RWPE1 (cell line): ENCODE measurements at regions of chr6 and their contacts with region 1.

Region 1: GRCh38 chr6:83514866-83515466 is 2.6 kb downstream of the PRSS35 start:
- DNase-seq: peak; percentile 38
- H3K27ac ChIP-seq: no peak overlapping the region
- CTCF ChIP-seq: peak; percentile 77

Region 2: DNA sequence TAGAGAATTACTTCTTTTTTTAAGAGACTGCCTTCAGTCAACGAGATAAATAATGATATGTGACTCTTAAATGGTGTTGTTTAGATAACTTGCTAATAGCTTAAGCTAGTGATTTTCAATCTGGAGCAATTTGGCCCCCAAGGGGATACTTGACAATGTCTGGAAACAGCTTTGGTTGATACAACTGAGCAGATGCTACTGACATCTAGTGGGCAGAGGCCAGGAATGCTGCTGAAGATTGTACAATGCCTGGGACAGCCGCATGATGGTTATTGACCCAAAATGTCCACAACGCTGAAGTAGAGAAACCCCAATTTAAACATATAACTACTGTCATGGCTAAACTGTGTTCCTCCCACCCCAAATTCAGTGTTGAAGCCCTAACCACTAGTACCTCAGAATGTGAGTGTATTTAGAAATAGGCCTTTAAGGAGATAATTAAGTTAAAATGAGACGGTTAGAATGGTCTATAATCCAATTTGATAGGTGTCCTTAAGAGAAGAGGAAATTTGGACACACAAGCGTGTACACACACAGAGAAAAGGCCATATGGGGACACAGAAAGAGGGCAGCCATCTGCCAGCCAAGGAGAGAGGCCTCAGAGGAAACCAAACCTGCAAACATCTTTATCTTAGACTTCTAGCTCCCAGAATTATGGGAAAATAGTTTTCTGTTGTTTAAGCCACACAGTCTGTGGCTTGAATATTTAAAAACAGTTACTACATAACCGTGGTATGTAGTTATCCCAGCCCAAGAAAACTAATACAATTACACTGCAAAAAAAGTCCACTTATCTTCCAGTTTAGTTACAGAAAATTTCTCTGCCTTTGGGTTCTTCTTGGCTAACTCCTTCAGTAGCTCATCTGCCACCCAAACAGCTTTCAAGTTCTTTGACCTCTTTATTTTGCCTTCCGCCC is 299.6 kb before region 1 on chr6:
- CTCF ChIA-PET with region 1: interaction called, 17 read pairs
- POLR2A ChIA-PET with region 1: no interaction called
- DNase-seq: peak; percentile 50
- H3K27ac ChIP-seq: no peak overlapping the region
- CTCF ChIP-seq: peak; percentile 92

Region 3: GRCh38 chr6:83221889-83222479 is 293.0 kb before region 1 on chr6:
- CTCF ChIA-PET with region 1: interaction called, 41 read pairs
- POLR2A ChIA-PET with region 1: no interaction called
- DNase-seq: peak; percentile 21
- H3K27ac ChIP-seq: no peak overlapping the region
- CTCF ChIP-seq: peak; percentile 70

Region 4: DNA sequence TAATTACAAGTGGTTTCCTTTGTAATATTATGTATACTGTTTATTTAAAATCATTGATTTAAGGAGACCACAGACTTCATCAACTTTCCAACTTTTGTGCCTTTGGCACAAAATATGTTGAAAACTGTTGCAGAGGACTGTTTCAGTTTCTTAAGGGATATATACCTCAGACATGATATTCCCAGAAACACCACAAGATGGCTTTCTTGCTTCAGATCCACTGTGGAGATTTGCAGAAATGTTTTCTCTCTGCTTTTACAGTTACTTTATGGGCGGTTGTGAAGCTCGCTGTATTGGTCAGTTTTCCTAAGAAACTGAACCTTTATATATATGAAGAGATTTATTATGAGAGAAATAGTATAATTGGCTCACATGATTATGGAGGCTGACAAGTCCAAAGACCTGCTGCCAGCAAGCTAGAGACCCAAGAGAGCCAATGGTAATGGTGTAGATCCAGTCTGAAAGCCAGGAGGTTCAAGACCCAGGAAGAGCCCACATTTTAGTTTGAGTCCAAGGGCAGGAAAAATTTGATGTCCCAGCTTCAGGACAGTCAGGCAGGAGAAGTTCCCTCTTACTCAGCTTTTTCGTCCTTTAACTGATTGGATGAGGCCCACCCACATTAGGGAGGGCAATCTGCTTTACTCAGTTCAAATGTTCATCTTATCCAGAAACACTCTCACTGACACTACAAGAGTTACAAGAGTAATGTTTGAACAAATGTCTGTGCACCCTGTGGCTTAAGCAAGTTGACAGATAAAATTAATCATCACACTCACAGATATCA is 96.9 kb before region 1 on chr6:
- CTCF ChIA-PET with region 1: interaction called, 19 read pairs
- POLR2A ChIA-PET with region 1: no interaction called
- DNase-seq: peak; percentile 48
- H3K27ac ChIP-seq: no peak overlapping the region
- CTCF ChIP-seq: peak; percentile 59